ENCODE measurements at regions of chr2 and their contacts with region 1.

Region 1: DNA sequence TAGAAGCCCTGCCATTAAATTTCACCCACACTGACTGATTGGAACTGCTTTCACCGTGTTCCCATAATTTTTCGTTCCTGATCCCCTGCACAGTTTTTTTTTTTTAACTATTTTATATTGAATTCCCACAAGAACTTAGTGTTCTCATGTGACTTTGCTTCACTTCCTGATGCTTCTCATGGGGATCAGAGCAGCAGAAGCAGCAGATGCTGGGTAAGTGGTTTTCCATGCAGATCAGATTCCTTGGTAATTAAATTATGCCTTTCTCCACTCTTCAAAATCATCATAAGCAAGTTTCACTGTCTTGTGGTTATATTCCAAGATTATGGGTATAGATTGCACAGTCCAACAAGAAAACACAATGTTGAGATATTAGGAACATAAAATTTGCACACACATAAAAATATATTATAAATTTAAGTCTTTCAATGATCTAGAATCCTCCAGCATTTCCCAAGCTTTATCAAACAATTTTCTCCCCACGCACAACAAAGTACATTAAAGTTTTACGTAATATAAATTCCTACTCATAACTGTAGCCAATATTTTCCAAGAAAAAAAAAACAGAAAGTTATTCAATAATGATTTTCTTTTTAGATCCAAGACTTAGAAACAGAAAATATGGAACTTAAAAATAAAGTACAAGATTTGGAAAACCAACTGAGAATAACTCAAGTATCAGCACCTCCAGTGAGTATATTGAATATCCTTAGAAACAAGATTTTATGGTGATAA is 277.9 kb downstream of the GULP1 start:
- DNase-seq: no peak
- ATAC-seq: no peak

Region 2: GRCh38 chr2:188529746-188530145 is 39.9 kb before region 1 on chr2:
- intact Hi-C with region 1: loop called (anchors 5 kb)
- DNase-seq: no peak
- ATAC-seq: no peak

Region 3: DNA sequence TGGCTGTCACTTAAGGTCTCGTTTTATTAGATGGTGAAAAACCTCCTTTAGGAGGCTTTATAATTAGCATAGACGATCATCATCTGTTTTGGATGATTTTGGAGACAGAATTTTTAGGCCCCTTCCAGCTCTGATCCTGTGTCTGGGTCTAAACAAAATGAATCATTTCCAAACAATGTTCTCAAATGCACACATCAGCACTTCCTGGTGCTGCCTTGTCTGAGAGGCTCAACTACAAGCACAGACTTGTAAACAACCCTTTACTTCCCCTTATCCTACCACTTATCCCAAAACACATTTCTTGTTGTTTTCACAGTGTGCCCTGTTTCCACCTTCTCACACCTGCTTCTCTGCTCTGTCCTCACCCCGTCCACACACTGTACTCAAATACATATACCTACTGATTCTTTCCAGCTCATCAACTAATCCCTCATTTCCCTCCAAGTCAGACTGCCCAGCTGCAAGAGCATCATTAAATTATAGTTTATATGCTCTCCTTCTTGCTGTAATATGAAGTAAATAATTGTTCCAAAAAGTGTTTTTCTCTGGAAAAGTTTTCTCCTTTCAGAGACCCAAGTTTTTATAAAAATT is 333.4 kb after region 1 on chr2:
- intact Hi-C with region 1: no loop called
- DNase-seq: no peak
- ATAC-seq: no peak

Measured in Right ventricle myocardium inferior (tissue), 1 donor.